Psoas muscle (tissue), 8 donors: ENCODE measurements at regions of chr1 and their contacts with region 1.

Region 1: DNA sequence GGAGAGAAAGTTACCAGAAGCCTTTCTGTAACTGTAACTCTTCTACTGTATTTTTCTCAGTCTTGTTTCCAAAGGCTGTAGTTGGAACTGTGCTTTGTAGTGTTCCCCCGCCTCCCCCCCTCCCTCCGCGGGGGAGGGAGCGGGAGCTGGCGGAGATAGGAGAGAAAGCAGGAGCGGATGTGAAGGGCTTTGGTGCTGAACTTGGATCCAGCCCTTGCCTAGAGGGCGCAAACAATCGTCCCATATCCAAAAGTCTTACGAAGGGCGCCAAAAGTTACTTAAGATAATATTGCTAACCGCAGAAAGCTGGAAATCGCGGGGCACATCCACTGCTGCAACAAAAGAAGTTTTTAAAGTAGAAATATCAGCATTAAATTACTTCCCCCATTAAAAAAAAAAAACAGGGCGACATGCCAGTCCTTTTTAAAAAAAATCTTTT is 2.4 kb upstream of the NFIA start:
- DNase-seq: peak; percentile 80 to 89
- ATAC-seq: peak; percentile 40 to 65 (median 56)
- H3K4me3 ChIP-seq: peak overlapping the region; percentile 90
- H3K27ac ChIP-seq: peak overlapping the region; percentile 97
- H3K4me1 ChIP-seq: peaks cover 32% of the 10 kb centered on the region
- H3K27me3 ChIP-seq: no peaks in the 10 kb centered on the region
- CTCF ChIP-seq: peak; percentile 28

Region 2: GRCh38 chr1:60866917-60867531 is 212.9 kb before region 1 on chr1:
- intact Hi-C with region 1: loop called in 1 of 2 experiments (anchors 5 kb)
- DNase-seq: no peak
- ATAC-seq: peak in 3 of 4 donors; percentile 43 to 48 (median 43)
- H3K4me3 ChIP-seq: peak overlapping the region; percentile 58
- H3K27ac ChIP-seq: peak overlapping the region; percentile 70
- H3K4me1 ChIP-seq: peaks cover 9% of the 10 kb centered on the region
- H3K27me3 ChIP-seq: peaks cover 0 to 3% (median 0%) of the 10 kb centered on the region in 3 donors
- CTCF ChIP-seq: no peak

Region 3: GRCh38 chr1:61028136-61028535 is 51.8 kb before region 1 on chr1:
- intact Hi-C with region 1: no loop called
- DNase-seq: no peak
- ATAC-seq: no peak
- H3K4me3 ChIP-seq: no peak overlapping the region
- H3K27ac ChIP-seq: no peak overlapping the region
- H3K4me1 ChIP-seq: no peaks in the 10 kb centered on the region
- H3K27me3 ChIP-seq: no peaks in the 10 kb centered on the region
- CTCF ChIP-seq: no peak

Region 4: DNA sequence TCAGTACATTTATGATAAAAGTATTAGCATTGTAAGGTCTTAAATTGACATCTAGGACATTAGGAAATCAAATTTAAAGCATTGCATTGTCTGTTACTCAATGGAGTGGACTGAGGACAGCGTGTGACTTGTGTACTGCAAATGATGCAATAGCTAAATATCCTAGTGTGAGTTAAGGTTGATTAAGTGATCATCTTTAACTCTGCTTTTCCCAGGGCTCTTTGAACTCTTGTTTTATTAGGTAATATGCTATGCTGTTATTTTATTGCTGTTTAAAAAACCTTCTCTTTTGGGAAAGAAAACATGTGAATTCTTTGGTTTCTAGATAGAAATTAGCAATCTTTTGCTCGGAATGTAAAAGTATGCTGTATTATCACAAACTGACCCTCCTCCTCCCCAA is 41.1 kb after region 1 on chr1:
- intact Hi-C with region 1: loop called in 1 of 2 experiments (anchors 2 kb)
- DNase-seq: no peak
- ATAC-seq: peak; percentile 77 to 84 (median 79)
- H3K4me3 ChIP-seq: peak overlapping the region; percentile 62
- H3K27ac ChIP-seq: peak overlapping the region; percentile 91
- H3K4me1 ChIP-seq: peaks cover 90% of the 10 kb centered on the region
- H3K27me3 ChIP-seq: no peaks in the 10 kb centered on the region
- CTCF ChIP-seq: no peak

Region 5: GRCh38 chr1:61184040-61184713 is 104.3 kb after region 1 on chr1:
- intact Hi-C with region 1: loop called (anchors 5 kb)
- DNase-seq: peak; percentile 93 to 97
- ATAC-seq: peak; percentile 89 to 94 (median 90)
- H3K4me3 ChIP-seq: peak overlapping the region; percentile 66
- H3K27ac ChIP-seq: peak overlapping the region; percentile 94
- H3K4me1 ChIP-seq: peaks cover 71% of the 10 kb centered on the region
- H3K27me3 ChIP-seq: no peaks in the 10 kb centered on the region
- CTCF ChIP-seq: no peak

Region 6: DNA sequence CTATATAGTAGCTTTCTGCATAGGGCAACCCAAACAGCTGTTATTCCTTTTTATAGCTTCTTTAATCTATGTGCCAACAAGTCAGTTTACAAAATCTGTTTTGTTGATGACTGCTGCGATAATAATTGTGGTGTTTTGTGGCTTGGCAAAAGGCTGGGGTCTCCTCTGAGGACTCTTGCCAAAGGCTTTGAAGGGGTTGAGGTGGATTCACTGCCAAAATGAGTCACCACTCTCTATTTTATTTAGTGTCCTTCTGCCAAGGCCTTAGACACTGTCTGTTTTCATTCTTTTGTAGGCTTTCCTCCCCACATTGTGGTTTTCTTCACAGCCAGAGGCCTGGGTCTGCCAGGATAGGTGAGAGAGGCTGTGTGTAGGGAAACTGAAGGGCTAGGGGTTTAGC is 164.2 kb after region 1 on chr1:
- intact Hi-C with region 1: loop called in 1 of 2 experiments (anchors 5 kb)
- DNase-seq: no peak
- ATAC-seq: peak; percentile 42 to 55 (median 44)
- H3K4me3 ChIP-seq: no peak overlapping the region
- H3K27ac ChIP-seq: peak overlapping the region; percentile 93
- H3K4me1 ChIP-seq: peaks cover 66% of the 10 kb centered on the region
- H3K27me3 ChIP-seq: no peaks in the 10 kb centered on the region
- CTCF ChIP-seq: no peak

Region 7: DNA sequence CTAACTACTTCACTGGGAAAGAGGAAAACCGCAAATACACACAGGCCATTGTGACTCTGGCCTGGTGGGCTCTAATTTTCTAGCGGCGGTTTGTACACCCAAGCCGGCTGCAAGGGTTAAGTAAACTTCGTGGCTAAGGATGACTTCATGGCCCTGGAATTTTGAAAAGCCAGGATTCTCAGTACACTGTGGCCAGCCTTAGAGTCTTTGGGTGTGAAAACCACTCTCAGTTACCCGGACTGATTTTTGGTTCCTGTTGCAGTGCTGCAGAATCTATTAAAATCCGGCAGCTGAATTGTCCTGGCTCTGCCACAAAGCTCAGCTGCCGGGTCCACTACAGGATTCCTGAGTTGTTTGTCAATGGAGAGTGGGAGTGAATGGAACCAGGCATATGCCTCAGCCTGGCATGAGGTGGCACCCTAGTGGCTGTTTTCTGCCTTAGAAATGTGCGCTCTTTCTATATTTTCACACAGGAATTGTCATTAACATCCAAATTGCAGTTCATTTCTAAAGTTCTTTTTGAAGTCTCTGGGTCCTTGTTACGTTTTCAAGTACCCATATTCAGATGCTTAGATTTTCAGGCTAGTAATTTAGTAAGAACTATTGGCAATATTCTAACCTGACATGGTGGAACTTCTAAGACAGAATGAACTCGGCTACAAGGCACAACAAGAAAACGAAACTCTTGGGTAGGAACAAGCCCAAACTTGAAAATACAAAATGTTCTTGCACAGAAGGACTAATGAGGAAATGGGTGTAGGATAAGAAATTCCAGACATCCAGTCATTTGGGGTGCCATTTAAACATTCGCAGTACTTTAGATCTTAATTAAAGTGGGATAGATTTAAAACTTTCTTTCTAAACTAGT is 258.3 kb after region 1 on chr1:
- intact Hi-C with region 1: loop called (anchors 5 to 10 kb)
- DNase-seq: peak; percentile 71 to 84
- ATAC-seq: peak; percentile 88 to 92 (median 92)
- H3K4me3 ChIP-seq: peak overlapping the region; percentile 53
- H3K27ac ChIP-seq: peak overlapping the region; percentile 87
- H3K4me1 ChIP-seq: peaks cover 33% of the 10 kb centered on the region
- H3K27me3 ChIP-seq: no peaks in the 10 kb centered on the region
- CTCF ChIP-seq: peak; percentile 72